PC-9 (cell line): ENCODE measurements at regions of chr11 and their contacts with region 1.

Region 1: DNA sequence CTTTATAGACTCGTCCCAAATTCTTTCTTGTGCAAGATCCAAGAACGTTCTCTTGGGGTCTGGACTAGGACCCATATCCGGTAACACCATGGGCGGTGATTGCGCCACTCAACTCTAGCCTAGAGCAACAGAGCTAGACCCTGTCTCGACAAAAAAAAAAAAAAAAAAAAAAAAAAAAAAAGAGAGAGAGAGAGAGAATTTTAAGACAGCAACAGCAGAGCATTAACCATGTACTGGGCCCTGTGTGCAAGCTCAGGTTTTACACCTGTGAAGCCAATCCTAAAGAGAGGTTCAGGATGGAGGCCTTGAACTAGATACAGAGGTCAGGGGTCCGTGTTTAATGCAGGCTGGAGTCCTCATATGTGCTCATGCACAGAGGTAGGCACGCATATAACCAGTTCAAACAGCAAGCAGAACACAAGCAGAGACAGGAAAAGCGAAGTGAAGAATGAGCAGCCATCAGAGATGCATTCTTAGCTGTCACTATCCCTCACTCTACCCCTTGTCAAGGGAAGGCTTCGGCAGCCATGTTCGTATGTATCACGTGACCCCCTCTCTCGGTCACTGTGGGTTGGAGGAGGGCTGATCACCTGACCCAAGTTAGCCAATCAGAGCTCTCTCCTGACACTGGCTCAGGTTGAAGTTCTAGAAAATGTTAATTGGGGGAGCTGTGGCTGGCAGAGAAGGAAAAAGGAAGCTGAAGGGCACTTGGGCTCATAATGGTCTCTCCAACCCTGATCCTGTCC is 16.6 kb upstream of the SYT12 start:
- DNase-seq: peak; percentile 37 to 79
- H3K4me3 ChIP-seq: peak overlapping the region; percentile 52; the same call in 1 of the 2 replicates
- H3K27ac ChIP-seq: no peak overlapping the region
- H3K4me1 ChIP-seq: peaks cover 13% of the 10 kb centered on the region
- H3K27me3 ChIP-seq: no peaks in the 10 kb centered on the region
- CTCF ChIP-seq: no peak

Region 2: GRCh38 chr11:66987158-66987620 is 19.1 kb before region 1 on chr11:
- CTCF ChIA-PET with region 1: interaction called, 25 read pairs
- POLR2A ChIA-PET with region 1: no interaction called
- intact Hi-C with region 1: no loop called
- DNase-seq: no peak
- H3K4me3 ChIP-seq: no peak overlapping the region
- H3K27ac ChIP-seq: no peak overlapping the region
- H3K4me1 ChIP-seq: peaks cover 18% of the 10 kb centered on the region
- H3K27me3 ChIP-seq: no peaks in the 10 kb centered on the region
- CTCF ChIP-seq: no peak

Region 3: GRCh38 chr11:67022328-67022927 is 16.1 kb after region 1 on chr11:
- CTCF ChIA-PET with region 1: interaction called, 16 read pairs
- POLR2A ChIA-PET with region 1: no interaction called
- intact Hi-C with region 1: no loop called
- DNase-seq: peak; percentile 86 to 95
- H3K4me3 ChIP-seq: peak overlapping the region; percentile 80
- H3K27ac ChIP-seq: peak overlapping the region; percentile 50
- H3K4me1 ChIP-seq: peaks cover 44% of the 10 kb centered on the region
- H3K27me3 ChIP-seq: no peaks in the 10 kb centered on the region
- CTCF ChIP-seq: no peak

Region 4: DNA sequence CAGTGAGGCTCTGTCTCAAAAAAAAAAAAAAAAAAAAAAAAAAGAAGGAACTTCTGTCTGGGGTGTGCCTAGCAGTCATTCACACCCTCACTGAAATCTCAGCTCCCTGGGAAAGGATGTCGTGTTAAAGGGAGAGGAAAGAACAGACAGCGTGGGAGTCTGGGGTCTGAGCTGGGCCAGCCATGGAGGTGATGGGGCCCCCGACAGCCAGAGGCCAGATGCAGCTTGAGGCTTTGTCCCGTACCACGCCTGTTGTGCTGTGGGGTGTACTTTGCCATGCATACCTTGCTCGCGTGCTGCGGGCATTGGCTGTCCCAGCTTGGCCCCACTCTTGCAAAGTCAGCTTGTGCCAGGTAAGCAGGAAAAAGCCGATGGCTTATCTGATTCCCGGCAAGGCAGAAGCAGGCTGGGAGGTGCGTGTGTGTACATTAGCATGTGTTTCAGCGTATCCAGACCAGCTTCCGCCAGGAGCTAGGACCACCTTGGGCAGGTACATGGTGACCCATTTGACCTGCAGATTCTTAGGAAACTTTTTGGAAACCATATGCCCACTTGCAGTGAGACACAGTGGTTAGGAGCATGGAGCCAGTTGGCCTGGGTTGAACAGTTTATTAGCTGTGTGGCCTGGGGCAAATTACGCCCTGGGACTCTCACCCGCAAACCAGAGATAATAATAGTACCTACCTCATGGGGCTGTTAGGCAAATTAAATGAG is 21.3 kb after region 1 on chr11:
- CTCF ChIA-PET with region 1: interaction called, 10 read pairs
- POLR2A ChIA-PET with region 1: interaction called, 4 read pairs
- intact Hi-C with region 1: no loop called
- DNase-seq: peak in 1 of 2 experiments; percentile 50
- H3K4me3 ChIP-seq: no peak overlapping the region
- H3K27ac ChIP-seq: no peak overlapping the region
- H3K4me1 ChIP-seq: peaks cover 66% of the 10 kb centered on the region
- H3K27me3 ChIP-seq: no peaks in the 10 kb centered on the region
- CTCF ChIP-seq: no peak

Region 5: DNA sequence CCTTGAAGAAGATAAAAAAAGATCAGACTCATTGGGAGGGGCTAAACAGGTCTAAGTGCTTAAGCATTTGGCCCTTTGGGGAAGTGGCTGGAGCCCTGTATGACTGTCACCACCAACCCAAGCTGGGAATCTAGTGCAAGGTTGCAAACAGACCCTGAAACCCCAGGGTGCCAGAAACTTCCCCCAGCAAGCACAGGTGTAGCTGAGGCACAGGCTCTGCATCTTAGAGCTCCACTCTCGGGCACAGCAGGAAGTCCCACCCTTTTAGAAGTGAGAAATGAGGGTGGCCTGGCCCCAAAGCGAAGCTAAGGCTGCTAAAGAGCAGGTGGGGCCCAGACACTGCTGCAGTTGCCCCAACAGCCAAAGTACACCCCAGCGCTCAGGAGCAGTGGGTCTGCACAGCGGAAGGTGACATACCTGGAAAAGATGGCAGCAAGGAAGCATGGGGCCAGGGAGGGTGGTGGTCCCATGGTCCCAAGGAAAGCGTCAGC is 107.0 kb after region 1 on chr11:
- CTCF ChIA-PET with region 1: no interaction called
- POLR2A ChIA-PET with region 1: no interaction called
- intact Hi-C with region 1: no loop called
- DNase-seq: no peak
- H3K4me3 ChIP-seq: no peak overlapping the region
- H3K27ac ChIP-seq: no peak overlapping the region
- H3K4me1 ChIP-seq: no peaks in the 10 kb centered on the region
- H3K27me3 ChIP-seq: no peaks in the 10 kb centered on the region
- CTCF ChIP-seq: no peak

Region 6: GRCh38 chr11:67356864-67357561 is 350.7 kb after region 1 on chr11:
- CTCF ChIA-PET with region 1: no interaction called
- POLR2A ChIA-PET with region 1: no interaction called
- intact Hi-C with region 1: no loop called
- DNase-seq: peak; percentile 79 to 84
- H3K4me3 ChIP-seq: peak overlapping the region; percentile 38; the same call in 1 of the 2 replicates
- H3K27ac ChIP-seq: peak overlapping the region; percentile 90
- H3K4me1 ChIP-seq: peaks cover 64% of the 10 kb centered on the region
- H3K27me3 ChIP-seq: no peaks in the 10 kb centered on the region
- CTCF ChIP-seq: peak; percentile 99